Dendritic cell treated with granulocyte-macrophage colony-stimulating factor and Interleukin-4, amounts not matched to agents 40 ng/mL and 50 ng/mL, for 4 days (primary cell): ENCODE measurements at regions of chr2 and their contacts with region 1.

Region 1: GRCh38 chr2:70789304-70790135 is 923 bp downstream of the FIGLA start:
- H3K4me3 Mint-ChIP-seq: peak overlapping the region; percentile 61
- H3K27ac Mint-ChIP-seq: peak overlapping the region; percentile 6
- H3K4me1 Mint-ChIP-seq: peaks cover 49% of the 10 kb centered on the region
- H3K27me3 Mint-ChIP-seq: peaks cover 32% of the 10 kb centered on the region

Region 2: DNA sequence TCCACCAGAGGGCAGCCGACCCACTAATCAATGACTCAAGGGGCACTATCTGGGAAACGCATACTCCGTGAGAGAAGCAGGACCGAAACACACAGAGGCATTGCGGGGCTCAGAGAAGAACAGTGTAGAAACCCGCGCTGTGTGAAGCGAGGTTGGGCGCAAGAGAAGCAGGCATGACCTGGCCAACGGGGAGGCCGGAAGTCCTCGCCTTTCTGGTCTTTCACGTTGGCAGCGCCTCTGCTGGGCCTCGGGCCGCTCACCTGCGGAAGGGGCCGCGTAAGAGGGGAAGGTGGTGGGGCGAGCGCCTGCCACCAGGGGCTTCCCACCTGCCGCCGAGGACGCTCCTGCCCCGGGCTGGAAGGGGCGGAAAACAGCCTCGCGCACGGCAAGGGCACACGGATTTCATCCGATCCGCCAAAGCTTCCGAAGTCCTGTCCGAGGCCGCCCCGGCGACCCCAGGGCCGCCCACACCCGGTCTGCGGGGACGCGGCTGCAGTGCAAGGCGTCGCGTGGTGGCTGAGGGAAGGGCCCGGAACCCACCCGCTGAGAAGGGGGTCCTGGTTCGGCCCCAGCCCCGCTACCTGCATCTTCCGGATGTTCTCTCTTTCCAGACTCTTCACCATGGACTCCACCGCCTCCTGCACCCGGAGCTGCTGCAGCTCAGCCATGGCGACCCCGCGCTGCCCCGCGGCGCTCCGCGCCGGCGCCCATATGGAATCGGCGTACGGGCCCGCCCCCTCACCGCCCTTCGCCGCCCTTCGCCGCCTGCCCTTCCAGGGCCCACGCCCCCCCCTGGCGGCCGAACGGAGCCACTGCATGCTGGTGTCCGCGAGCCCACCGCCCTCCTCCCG is 488.0 kb before region 1 on chr2 and contains the start of gene FAM136A:
- intact Hi-C with region 1: loop called (anchors 5 kb)
- H3K4me3 Mint-ChIP-seq: peak within 1 kb of the TSS; percentile 85
- H3K27ac Mint-ChIP-seq: peak within 1 kb of the TSS; percentile 86
- H3K4me1 Mint-ChIP-seq: peaks cover 18% of the 10 kb centered on the region
- H3K27me3 Mint-ChIP-seq: no peaks in the 10 kb centered on the region

Region 3: GRCh38 chr2:70686577-70687460 is 102.7 kb before region 1 on chr2:
- intact Hi-C with region 1: loop called (anchors 10 kb)
- H3K4me3 Mint-ChIP-seq: no peak overlapping the region
- H3K27ac Mint-ChIP-seq: peak overlapping the region; percentile 24
- H3K4me1 Mint-ChIP-seq: peaks cover 17% of the 10 kb centered on the region
- H3K27me3 Mint-ChIP-seq: peaks cover 3% of the 10 kb centered on the region

Region 4: GRCh38 chr2:70748002-70748784 is 41.3 kb before region 1 on chr2:
- intact Hi-C with region 1: no loop called
- H3K4me3 Mint-ChIP-seq: no peak overlapping the region
- H3K27ac Mint-ChIP-seq: no peak overlapping the region
- H3K4me1 Mint-ChIP-seq: peaks cover 6% of the 10 kb centered on the region
- H3K27me3 Mint-ChIP-seq: peaks cover 14% of the 10 kb centered on the region

Region 5: DNA sequence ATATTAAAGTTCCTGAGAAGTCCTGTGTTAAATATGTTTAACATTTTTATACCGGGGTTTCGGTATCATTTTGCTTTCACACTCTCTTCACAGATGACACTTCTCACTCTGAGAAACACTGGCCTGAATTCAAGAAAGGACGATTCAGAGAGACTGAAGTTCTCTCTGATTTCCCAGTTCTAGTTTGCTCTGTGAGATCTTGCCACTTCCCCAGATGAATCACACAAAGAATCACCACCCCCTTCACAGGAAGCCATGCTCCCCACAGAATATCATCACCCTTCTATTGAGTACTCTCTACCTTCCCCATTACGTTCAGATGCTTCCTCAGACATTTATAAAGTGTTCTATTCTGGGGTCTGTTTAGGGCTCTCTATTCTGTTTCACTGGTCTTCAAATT is 62.2 kb after region 1 on chr2:
- intact Hi-C with region 1: loop called (anchors 5 kb)
- H3K4me3 Mint-ChIP-seq: no peak overlapping the region
- H3K27ac Mint-ChIP-seq: peak overlapping the region; percentile 81
- H3K4me1 Mint-ChIP-seq: peaks cover 71% of the 10 kb centered on the region
- H3K27me3 Mint-ChIP-seq: no peaks in the 10 kb centered on the region

Region 6: GRCh38 chr2:70919672-70920366 is 130.3 kb after region 1 on chr2:
- intact Hi-C with region 1: loop called (anchors 1 kb)
- H3K4me3 Mint-ChIP-seq: no peak overlapping the region
- H3K27ac Mint-ChIP-seq: no peak overlapping the region
- H3K4me1 Mint-ChIP-seq: no peaks in the 10 kb centered on the region
- H3K27me3 Mint-ChIP-seq: peaks cover 52% of the 10 kb centered on the region